Cardiac septum (tissue), 1 donor: ENCODE measurements at regions of chr12 and their contacts with region 1.

Region 1: DNA sequence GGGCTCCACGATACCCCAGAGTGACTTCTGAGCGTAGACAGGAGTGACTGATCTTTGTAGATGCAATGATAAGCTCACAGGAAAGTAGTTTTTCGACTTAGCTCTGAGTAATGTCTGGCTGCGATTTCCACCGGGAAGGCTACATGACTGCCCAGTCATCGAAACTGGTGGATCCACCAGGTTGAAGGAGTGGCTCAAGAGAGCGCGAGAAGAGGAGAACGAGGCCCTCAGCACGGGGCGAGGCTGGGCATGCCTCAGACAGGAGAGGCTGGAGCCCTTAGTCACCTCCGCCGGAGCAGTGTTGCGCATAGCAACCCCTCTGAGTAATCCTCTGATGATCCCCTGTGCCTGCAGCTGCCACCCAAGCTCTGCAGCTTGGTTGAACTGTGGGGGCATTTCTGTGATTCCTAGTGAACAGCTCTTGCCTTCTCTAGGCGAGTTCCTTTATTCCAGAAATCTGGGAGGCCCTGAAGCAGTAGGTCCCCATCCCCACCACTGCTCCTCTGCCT is 25.6 kb downstream of the ELK3 start:
- DNase-seq: no peak

Region 2: DNA sequence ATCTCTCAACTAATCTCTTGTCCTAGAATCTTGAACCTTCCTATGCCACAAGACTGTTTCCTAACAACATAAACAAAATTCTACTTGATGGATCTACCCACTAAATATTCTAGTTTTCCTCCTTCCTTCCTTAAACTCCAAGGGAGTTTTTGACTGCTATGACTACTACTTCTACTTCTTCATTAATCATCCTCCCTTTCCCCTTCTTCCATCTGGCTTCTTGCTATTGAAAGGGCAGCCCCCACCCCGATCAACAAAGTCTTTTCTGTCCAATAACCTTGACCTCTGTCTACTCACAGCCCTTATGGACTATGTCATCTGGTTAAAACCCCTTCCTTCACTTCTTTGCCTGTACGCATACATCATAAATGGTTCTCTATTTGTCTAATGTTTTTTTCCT is 189.9 kb before region 1 on chr12:
- intact Hi-C with region 1: no loop called
- DNase-seq: no peak

Region 3: GRCh38 chr12:96061864-96062453 is 157.8 kb before region 1 on chr12:
- intact Hi-C with region 1: loop called (anchors 2 kb)
- DNase-seq: no peak

Region 4: GRCh38 chr12:96237465-96238077 is 17.8 kb after region 1 on chr12:
- intact Hi-C with region 1: loop called (anchors 2 kb)
- DNase-seq: no peak

Region 5: GRCh38 chr12:96399919-96400797 is 180.4 kb after region 1 on chr12 and contains the start of gene CDK17:
- intact Hi-C with region 1: loop called (anchors 5 kb)
- DNase-seq: peak; percentile 94
- total RNA-seq, gene CDK17: 22.9 TPM

Region 6: DNA sequence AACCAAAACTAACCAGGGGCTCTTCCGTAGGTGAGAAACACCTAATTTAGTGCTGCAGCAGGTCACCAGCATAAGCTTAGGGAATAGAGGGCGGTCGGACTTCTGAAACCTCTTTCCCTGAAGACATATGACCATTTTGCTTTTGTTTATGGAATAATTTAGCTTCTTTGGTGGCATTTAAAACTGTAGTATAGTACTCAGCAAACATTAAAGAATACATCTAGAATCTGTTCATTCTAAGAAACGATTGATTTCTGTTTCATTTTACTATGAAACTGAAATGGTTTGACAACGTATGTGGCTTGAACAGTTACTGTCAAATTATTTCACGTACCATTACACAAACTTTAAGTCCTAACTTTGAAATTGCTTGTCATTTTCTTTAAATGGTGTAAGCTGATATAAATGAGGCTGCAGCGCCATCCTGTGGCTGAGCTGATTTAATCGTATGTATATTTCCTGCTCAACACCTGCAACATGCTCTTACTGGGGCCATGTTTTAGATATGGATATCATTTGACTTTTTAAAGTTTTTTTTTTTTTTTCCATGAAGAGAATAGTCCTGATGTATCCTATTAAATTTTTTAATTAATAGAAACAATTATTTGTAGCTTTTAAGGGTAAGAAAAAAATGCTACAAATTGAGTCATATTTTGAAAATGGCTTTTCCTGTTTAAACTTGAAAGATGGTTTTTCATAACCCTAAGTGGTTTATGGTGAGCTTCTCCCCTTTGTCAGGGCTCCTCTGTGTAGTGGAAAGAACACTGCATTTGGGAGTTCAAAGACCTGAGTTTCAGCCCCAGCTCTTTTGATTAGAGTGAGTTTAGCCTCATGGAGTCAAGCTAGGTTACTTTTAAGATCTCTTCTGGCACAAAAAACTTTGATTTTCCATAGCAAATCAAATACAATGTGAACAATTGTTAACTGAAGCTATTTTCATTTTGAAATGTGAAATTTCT is 297.0 kb after region 1 on chr12:
- intact Hi-C with region 1: loop called (anchors 10 kb)
- DNase-seq: peak; percentile 85